ENCODE measurements at regions of chr9 and their contacts with region 1.

Region 1: DNA sequence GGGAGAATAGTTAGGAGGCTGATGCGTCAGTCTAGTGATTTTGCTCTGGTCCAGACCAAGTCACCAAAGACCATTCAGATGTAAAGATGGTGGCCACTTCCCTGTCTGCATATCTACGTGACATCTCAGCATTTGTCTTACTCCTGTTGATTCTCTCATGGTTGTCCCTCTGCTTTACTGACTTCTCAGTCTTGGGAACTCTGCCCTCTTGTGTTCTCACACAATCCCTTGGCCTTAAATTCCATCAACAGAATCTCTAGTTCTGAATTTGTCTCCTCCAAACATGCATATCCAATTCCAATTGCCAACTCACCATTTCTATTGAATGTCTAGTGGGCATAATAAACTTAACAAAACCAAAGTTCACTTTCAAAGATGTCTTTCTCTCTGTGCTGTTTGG is 147.8 kb downstream of the SLC24A2 start:
- DNase-seq: no peak
- H3K4me3 Mint-ChIP-seq: no peak overlapping the region
- H3K27ac Mint-ChIP-seq: no peak overlapping the region
- H3K4me1 Mint-ChIP-seq: no peaks in the 10 kb centered on the region
- H3K27me3 Mint-ChIP-seq: peaks cover 22% of the 10 kb centered on the region
- CTCF ChIP-seq: no peak

Region 2: GRCh38 chr9:19493174-19493811 is 147.8 kb before region 1 on chr9:
- CTCF ChIA-PET with region 1: interaction called, 4 read pairs
- intact Hi-C with region 1: loop called (anchors 5 kb)
- DNase-seq: peak; percentile 34
- H3K4me3 Mint-ChIP-seq: no peak overlapping the region
- H3K27ac Mint-ChIP-seq: no peak overlapping the region
- H3K4me1 Mint-ChIP-seq: no peaks in the 10 kb centered on the region
- H3K27me3 Mint-ChIP-seq: peaks cover 48% of the 10 kb centered on the region
- CTCF ChIP-seq: peak; percentile 33

Region 3: GRCh38 chr9:19552282-19553105 is 88.6 kb before region 1 on chr9:
- CTCF ChIA-PET with region 1: no interaction called
- intact Hi-C with region 1: no loop called
- DNase-seq: no peak
- H3K4me3 Mint-ChIP-seq: no peak overlapping the region
- H3K27ac Mint-ChIP-seq: no peak overlapping the region
- H3K4me1 Mint-ChIP-seq: no peaks in the 10 kb centered on the region
- H3K27me3 Mint-ChIP-seq: peaks cover 28% of the 10 kb centered on the region
- CTCF ChIP-seq: no peak

Region 4: GRCh38 chr9:19799784-19800183 is 158.7 kb after region 1 on chr9:
- CTCF ChIA-PET with region 1: no interaction called
- intact Hi-C with region 1: no loop called
- DNase-seq: no peak
- H3K4me3 Mint-ChIP-seq: no peak overlapping the region
- H3K27ac Mint-ChIP-seq: no peak overlapping the region
- H3K4me1 Mint-ChIP-seq: no peaks in the 10 kb centered on the region
- H3K27me3 Mint-ChIP-seq: peaks cover 54% of the 10 kb centered on the region
- CTCF ChIP-seq: no peak